Common myeloid progenitor, CD34-positive (primary cell): ENCODE measurements at regions of chr20 and their contacts with region 1.

Region 1: GRCh38 chr20:833450-834150 is at the start of gene FAM110A:
- DNase-seq: peak; percentile 95 to 98 (median 98)
- H3K4me3 ChIP-seq: peak within 1 kb of the TSS; percentile 54 to 90 (median 82)
- H3K27ac ChIP-seq: peak within 1 kb of the TSS; percentile 72 to 90
- H3K4me1 ChIP-seq: peaks cover 0 to 60% (median 38%) of the 10 kb centered on the region in 4 experiments
- H3K27me3 ChIP-seq: no peaks in the 10 kb centered on the region

Region 2: DNA sequence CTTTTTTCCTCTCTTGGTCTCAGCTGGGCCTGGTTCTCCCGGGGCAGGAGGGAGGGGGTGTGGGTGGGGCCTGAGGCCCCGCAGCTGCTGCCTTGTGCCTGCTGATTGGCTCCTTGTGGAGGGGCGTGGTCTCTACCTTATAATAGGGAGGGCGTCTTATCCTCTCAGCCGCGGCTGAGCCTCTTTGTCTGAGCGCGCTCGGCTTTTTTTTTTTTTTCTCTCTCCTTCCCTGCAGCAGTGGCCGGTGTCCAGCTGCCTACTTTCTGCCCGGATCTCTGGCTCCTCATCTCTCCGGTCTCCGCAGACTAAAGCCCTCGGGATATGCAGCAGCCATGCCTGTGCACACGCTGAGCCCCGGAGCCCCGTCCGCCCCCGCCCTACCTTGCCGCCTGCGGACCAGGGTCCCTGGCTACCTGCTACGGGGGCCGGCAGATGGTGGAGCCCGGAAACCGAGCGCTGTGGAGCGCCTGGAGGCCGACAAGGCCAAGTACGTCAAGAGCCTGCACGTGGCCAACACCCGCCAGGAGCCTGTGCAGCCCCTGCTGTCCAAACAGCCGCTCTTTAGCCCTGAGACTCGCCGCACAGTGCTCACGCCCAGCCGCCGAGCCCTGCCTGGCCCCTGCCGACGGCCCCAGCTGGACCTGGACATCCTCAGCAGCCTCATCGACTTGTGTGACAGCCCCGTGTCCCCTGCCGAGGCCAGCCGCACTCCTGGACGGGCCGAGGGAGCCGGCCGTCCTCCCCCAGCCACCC is 11.0 kb after region 1 on chr20:
- CTCF ChIA-PET with region 1: interaction called, 10 read pairs
- POLR2A ChIA-PET with region 1: interaction called, 9 read pairs
- DNase-seq: peak; percentile 89 to 94 (median 93)
- H3K4me3 ChIP-seq: peak overlapping the region; percentile 43 to 78 (median 72)
- H3K27ac ChIP-seq: no peak overlapping the region
- H3K4me1 ChIP-seq: peaks cover 7 to 81% (median 75%) of the 10 kb centered on the region in 4 experiments
- H3K27me3 ChIP-seq: peaks cover 0 to 21% (median 2%) of the 10 kb centered on the region in 5 experiments